ENCODE measurements at regions of chr3 and their contacts with region 1.

Region 1: GRCh38 chr3:32420126-32421038 is 28.7 kb downstream of the CMTM7 start:
- DNase-seq: peak; percentile 51 to 60
- H3K4me3 ChIP-seq: no peak overlapping the region; a peak in 1 of 8 replicates
- H3K27ac ChIP-seq: peak overlapping the region; percentile 76
- H3K4me1 ChIP-seq: peaks cover 8 to 11% (median 10%) of the 10 kb centered on the region in 4 experiments
- H3K27me3 ChIP-seq: no peaks in the 10 kb centered on the region
- CTCF ChIP-seq: peak; percentile 13 to 38 (median 28)
- EP300 ChIP-seq: no peak
- POLR2A ChIP-seq: no peak
- RAD21 ChIP-seq: peak; percentile 14 to 33; a peak in 3 of 4 replicates

Region 2: GRCh38 chr3:32438596-32439344 is 18.4 kb after region 1 on chr3:
- CTCF ChIA-PET with region 1: interaction called, 10 read pairs
- POLR2A ChIA-PET with region 1: interaction called, 5 read pairs
- DNase-seq: peak in 1 of 2 experiments; percentile 36
- H3K4me3 ChIP-seq: no peak overlapping the region
- H3K27ac ChIP-seq: no peak overlapping the region
- H3K4me1 ChIP-seq: peaks cover 0 to 5% (median 1%) of the 10 kb centered on the region in 4 experiments; a peak in 2 of 7 replicates
- H3K27me3 ChIP-seq: no peaks in the 10 kb centered on the region
- CTCF ChIP-seq: no peak
- EP300 ChIP-seq: no peak
- POLR2A ChIP-seq: no peak
- RAD21 ChIP-seq: no peak